CD4-positive, alpha-beta T cell (primary cell): ENCODE measurements at regions of chr16 and their contacts with region 1.

Region 1: GRCh38 chr16:11797166-11797956 is at the start of gene ZC3H7A:
- DNase-seq: peak; percentile 82 to 98 (median 91)
- ATAC-seq: peak; percentile 90
- H3K4me3 ChIP-seq: peak within 1 kb of the TSS; percentile 91
- H3K4me3 Mint-ChIP-seq: peak within 1 kb of the TSS; percentile 97
- H3K27ac ChIP-seq: peak within 1 kb of the TSS; percentile 93 to 94
- H3K27ac Mint-ChIP-seq: peak within 1 kb of the TSS; percentile 100
- H3K4me1 ChIP-seq: peaks cover 68% of the 10 kb centered on the region
- H3K4me1 Mint-ChIP-seq: peaks cover 80% of the 10 kb centered on the region
- H3K27me3 ChIP-seq: no peaks in the 10 kb centered on the region
- H3K27me3 Mint-ChIP-seq: no peaks in the 10 kb centered on the region
- CTCF ChIP-seq: peak; percentile 65
- total RNA-seq, gene ZC3H7A: 131 to 143 TPM

Region 2: DNA sequence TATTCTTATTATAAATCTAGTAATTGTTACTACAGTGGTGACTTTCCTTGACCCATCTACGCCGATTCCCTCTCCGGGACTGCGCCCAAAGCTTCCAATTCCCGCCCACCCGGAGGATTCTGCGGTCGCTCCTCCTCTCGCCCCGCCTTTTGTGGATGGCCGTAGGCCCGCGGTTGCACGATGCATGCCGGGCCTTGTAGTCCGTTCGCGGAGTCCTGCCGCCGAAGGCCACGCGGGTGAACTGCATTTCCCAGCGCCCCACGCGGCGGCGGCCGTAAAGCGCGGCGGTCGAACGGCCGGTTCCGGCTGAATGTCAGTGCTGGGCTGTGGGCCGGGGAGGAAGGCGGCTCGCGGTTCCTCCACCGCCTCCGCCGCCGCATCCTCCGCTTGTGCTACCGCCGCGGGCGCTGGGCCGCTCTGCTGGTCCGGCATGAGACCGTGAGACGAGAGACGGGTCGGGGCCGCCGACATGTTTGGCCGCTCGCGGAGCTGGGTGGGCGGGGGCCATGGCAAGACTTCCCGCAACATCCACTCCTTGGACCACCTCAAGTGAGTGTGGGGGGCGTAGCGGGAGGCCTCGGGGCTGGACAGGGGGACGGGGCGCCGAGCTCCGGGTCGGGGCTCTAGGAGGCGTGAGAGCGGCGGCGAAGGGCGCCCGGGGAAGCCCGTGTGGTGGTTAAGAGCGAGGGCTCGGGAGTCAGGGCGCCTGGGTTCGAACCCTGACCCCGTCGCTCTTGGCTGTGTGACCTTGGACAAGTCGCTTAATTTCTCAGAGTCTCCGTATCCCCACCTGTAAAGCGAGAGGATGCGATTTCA is 852.9 kb before region 1 on chr16 and contains the start of gene CLEC16A:
- CTCF ChIA-PET with region 1: no interaction called
- POLR2A ChIA-PET with region 1: interaction called, 7 read pairs
- intact Hi-C with region 1: loop called in 1 of 2 experiments (anchors 5 kb)
- DNase-seq: peak; percentile 89 to 98 (median 95)
- ATAC-seq: peak; percentile 76
- H3K4me3 ChIP-seq: peak within 1 kb of the TSS; percentile 85
- H3K4me3 Mint-ChIP-seq: peak within 1 kb of the TSS; percentile 96
- H3K27ac ChIP-seq: peak within 1 kb of the TSS in 1 of 2 donors; percentile 55
- H3K27ac Mint-ChIP-seq: peak within 1 kb of the TSS; percentile 76
- H3K4me1 ChIP-seq: peaks cover 73% of the 10 kb centered on the region
- H3K4me1 Mint-ChIP-seq: peaks cover 73% of the 10 kb centered on the region
- H3K27me3 ChIP-seq: no peaks in the 10 kb centered on the region
- H3K27me3 Mint-ChIP-seq: no peaks in the 10 kb centered on the region
- CTCF ChIP-seq: no peak
- total RNA-seq, gene CLEC16A: 21.7 to 22.7 TPM

Region 3: GRCh38 chr16:11729787-11730186 is 67.6 kb before region 1 on chr16:
- CTCF ChIA-PET with region 1: no interaction called
- POLR2A ChIA-PET with region 1: no interaction called
- intact Hi-C with region 1: no loop called
- DNase-seq: no peak
- ATAC-seq: no peak
- H3K4me3 ChIP-seq: no peak overlapping the region
- H3K4me3 Mint-ChIP-seq: no peak overlapping the region
- H3K27ac ChIP-seq: no peak overlapping the region
- H3K27ac Mint-ChIP-seq: no peak overlapping the region
- H3K4me1 ChIP-seq: peaks cover 14% of the 10 kb centered on the region
- H3K4me1 Mint-ChIP-seq: peaks cover 51% of the 10 kb centered on the region
- H3K27me3 ChIP-seq: no peaks in the 10 kb centered on the region
- H3K27me3 Mint-ChIP-seq: no peaks in the 10 kb centered on the region
- CTCF ChIP-seq: no peak

Region 4: GRCh38 chr16:11742539-11743307 is 54.6 kb before region 1 on chr16 and contains the start of gene TXNDC11:
- CTCF ChIA-PET with region 1: interaction called, 26 read pairs
- POLR2A ChIA-PET with region 1: interaction called, 168 read pairs
- intact Hi-C with region 1: loop called (anchors 1 kb)
- DNase-seq: peak; percentile 98 to 100 (median 99)
- ATAC-seq: peak; percentile 92
- H3K4me3 ChIP-seq: peak within 1 kb of the TSS; percentile 95
- H3K4me3 Mint-ChIP-seq: peak within 1 kb of the TSS; percentile 96
- H3K27ac ChIP-seq: peak within 1 kb of the TSS; percentile 86 to 92
- H3K27ac Mint-ChIP-seq: peak within 1 kb of the TSS; percentile 99
- H3K4me1 ChIP-seq: peaks cover 52% of the 10 kb centered on the region
- H3K4me1 Mint-ChIP-seq: peaks cover 60% of the 10 kb centered on the region
- H3K27me3 ChIP-seq: no peaks in the 10 kb centered on the region
- H3K27me3 Mint-ChIP-seq: no peaks in the 10 kb centered on the region
- CTCF ChIP-seq: no peak
- total RNA-seq, gene TXNDC11: 111 to 112 TPM

Region 5: GRCh38 chr16:11783319-11784037 is 13.9 kb before region 1 on chr16:
- CTCF ChIA-PET with region 1: interaction called, 37 read pairs
- POLR2A ChIA-PET with region 1: interaction called, 163 read pairs
- intact Hi-C with region 1: loop called (anchors 1 to 2 kb)
- DNase-seq: peak in 10 of 14 experiments; percentile 19 to 91 (median 34)
- ATAC-seq: peak; percentile 80
- H3K4me3 ChIP-seq: peak overlapping the region; percentile 49
- H3K4me3 Mint-ChIP-seq: peak overlapping the region; percentile 76
- H3K27ac ChIP-seq: peak overlapping the region; percentile 95 to 98
- H3K27ac Mint-ChIP-seq: peak overlapping the region; percentile 94
- H3K4me1 ChIP-seq: peaks cover 66% of the 10 kb centered on the region
- H3K4me1 Mint-ChIP-seq: peaks cover 63% of the 10 kb centered on the region
- H3K27me3 ChIP-seq: no peaks in the 10 kb centered on the region
- H3K27me3 Mint-ChIP-seq: no peaks in the 10 kb centered on the region
- CTCF ChIP-seq: no peak

Region 6: DNA sequence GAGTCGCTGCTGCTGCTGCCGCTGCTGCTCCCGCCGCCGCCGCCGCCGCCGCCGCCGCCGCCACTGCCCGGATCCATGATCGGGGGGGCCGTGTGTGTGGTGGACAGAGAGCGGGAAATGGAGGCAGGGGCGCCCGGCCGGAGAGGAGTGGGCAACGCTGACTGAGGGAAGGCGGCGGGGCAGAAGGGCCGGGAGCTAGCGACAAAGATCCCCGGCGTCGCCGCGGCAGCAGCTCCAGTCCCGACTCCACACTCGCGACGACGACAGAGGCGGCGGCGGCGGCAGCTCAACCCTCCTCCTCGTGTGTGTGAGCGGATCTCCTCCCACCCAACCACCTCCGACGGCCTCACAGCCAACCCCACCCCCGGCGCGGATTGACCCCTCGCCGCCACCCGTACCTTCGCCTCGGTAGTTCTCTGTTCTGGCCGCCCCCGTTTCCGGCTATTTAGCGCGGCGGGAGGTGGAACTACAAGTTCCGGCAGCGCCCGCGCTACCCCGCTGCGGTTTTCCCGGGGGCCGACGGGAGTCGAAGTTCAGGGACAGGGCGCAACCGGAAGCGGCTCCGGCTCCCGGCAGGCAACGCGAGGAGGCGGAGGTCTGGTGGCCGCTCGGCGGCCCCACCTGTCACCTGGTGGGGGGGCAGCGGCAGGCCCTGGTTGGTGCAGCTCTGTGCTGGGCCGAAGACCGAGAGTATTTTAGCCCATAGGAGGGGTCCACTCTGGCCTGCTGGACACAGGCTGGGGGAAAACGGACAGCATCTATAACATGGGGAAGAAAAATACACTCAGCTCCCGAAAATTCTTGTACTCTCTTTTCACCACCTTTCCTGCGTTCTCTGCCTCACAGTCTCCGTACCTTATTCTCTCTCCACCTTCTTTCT is 118.5 kb after region 1 on chr16 and contains the start of gene GSPT1:
- CTCF ChIA-PET with region 1: interaction called, 4 read pairs
- POLR2A ChIA-PET with region 1: interaction called, 13 read pairs
- intact Hi-C with region 1: loop called in 1 of 2 experiments (anchors 5 kb)
- DNase-seq: peak; percentile 98 to 99 (median 99)
- ATAC-seq: peak; percentile 84
- H3K4me3 ChIP-seq: peak within 1 kb of the TSS; percentile 82
- H3K4me3 Mint-ChIP-seq: peak within 1 kb of the TSS; percentile 98
- H3K27ac ChIP-seq: peak within 1 kb of the TSS; percentile 84 to 86
- H3K27ac Mint-ChIP-seq: peak within 1 kb of the TSS; percentile 98
- H3K4me1 ChIP-seq: peaks cover 32% of the 10 kb centered on the region
- H3K4me1 Mint-ChIP-seq: peaks cover 33% of the 10 kb centered on the region
- H3K27me3 ChIP-seq: peaks cover 0 to 2% of the 10 kb centered on the region in 2 experiments
- H3K27me3 Mint-ChIP-seq: no peaks in the 10 kb centered on the region
- CTCF ChIP-seq: no peak
- total RNA-seq, gene GSPT1: 257 to 269 TPM